WTC11 (cell line): ENCODE measurements at regions of chr1 and their contacts with region 1.

Region 1: DNA sequence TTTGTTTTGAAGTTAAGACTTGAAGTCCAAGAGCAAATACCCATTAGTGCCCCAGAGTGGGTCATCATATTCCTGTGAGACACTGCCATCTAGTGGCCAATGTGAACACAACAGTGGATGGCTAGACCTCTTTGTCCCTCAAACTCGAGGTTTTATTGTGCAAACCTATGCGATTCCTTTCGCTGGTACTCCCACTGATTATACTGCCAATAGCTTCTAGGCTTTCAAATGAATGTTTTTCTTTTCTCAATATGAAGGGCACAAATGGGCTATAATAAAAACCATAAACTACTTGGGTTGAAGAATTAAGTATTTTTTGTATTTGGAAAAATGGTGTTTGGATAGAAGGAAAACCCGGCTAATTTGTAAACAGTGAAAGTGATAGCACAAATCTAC is 100.4 kb upstream of the ZNF281 start:
- DNase-seq: peak; percentile 84
- ATAC-seq: peak; percentile 96
- H3K4me3 Mint-ChIP-seq: no peak overlapping the region
- H3K27ac Mint-ChIP-seq: no peak overlapping the region
- H3K4me1 Mint-ChIP-seq: 0 out of 2 replicates have a peak, but pooled peaks cover 4% of the 10 kb centered on the region
- H3K27me3 Mint-ChIP-seq: no peaks in the 10 kb centered on the region
- CTCF ChIP-seq: peak; percentile 86

Region 2: DNA sequence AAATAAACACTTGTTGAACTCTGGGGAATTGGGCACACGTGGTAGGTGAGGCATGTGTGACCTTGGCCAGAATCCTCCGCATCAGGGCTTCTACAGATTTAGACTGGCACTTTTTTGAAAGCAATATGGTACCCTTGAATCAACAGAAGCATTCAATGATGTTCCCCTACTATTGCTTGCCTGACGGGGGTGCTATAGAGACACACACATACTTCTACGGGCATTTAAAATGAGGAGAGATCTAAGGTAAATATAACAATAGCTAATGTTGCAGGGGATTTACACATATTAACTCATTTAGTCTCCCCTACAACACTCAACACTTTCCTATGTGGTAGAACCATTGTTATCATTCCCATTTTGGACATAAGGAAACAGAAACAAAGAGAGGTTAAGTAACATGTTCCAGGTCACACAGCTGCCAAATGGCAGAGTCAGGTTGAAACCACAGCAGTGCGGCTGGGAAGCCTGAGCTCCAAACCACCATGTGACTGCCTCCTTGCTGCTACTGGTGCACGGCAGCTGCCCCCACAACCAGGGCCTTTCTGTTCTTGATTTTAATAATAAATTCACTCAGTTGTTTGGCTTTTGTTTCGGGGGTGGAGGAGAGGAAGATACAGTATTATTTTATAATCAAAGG is 247.8 kb before region 1 on chr1:
- CTCF ChIA-PET with region 1: interaction called, 11 read pairs
- POLR2A ChIA-PET with region 1: no interaction called
- DNase-seq: no peak
- ATAC-seq: peak; percentile 77
- H3K4me3 Mint-ChIP-seq: no peak overlapping the region
- H3K27ac Mint-ChIP-seq: no peak overlapping the region
- H3K4me1 Mint-ChIP-seq: no peaks in the 10 kb centered on the region; the same call in 1 of the 2 replicates
- H3K27me3 Mint-ChIP-seq: no peaks in the 10 kb centered on the region
- CTCF ChIP-seq: peak; percentile 32; the same call in 1 of the 2 replicates

Region 3: DNA sequence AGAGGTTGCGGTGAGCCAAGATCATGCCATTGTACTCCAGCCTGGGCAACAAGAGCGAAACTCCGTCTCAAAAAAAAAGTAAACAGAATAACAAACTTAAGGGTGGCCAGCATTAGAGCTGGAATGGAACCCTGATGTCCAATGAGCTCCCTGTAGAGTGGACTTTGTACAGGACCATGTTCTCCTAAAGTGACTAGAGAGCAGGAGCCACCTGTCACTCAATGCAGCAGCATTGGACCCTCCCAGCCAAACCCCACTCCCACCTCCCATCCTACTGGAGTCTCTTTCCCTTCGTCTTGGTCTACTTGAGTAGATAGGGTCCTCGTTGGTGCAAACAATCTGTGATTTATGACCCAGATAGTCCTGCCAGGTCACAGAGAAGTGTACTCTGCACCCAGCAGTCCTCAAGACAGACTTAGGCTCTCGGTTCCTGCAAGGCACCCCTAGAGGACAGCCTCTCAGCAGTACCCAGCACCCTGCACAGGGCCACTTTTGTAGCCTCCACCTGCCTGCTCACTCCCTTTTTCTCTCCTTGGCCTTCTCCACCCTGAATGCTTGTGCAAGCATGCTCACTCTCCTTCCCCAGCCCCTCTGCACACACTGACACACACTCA is 31.2 kb before region 1 on chr1:
- CTCF ChIA-PET with region 1: no interaction called
- POLR2A ChIA-PET with region 1: no interaction called
- DNase-seq: no peak
- ATAC-seq: no peak
- H3K4me3 Mint-ChIP-seq: no peak overlapping the region
- H3K27ac Mint-ChIP-seq: no peak overlapping the region
- H3K4me1 Mint-ChIP-seq: peaks cover 19% of the 10 kb centered on the region
- H3K27me3 Mint-ChIP-seq: peaks cover 3% of the 10 kb centered on the region; the same call in 1 of the 2 replicates
- CTCF ChIP-seq: no peak